ENCODE measurements at regions of chr6 and their contacts with region 1.

Region 1: GRCh38 chr6:150320442-150320841 is 48.4 kb upstream of the IYD start:
- DNase-seq: peak; percentile 94 to 96
- ATAC-seq: peak; percentile 89 to 90
- H3K4me3 ChIP-seq: no peak overlapping the region
- H3K27ac ChIP-seq: peak overlapping the region; percentile 65 to 93 (median 75)
- H3K4me1 ChIP-seq: peaks cover 42 to 56% of the 10 kb centered on the region in 2 donors
- H3K27me3 ChIP-seq: no peaks in the 10 kb centered on the region
- CTCF ChIP-seq: no peak
- POLR2A ChIP-seq: no peak

Region 2: GRCh38 chr6:150142670-150143515 is 177.5 kb before region 1 on chr6 and contains the start of gene PPP1R14C:
- in situ Hi-C with region 1: no loop called
- intact Hi-C with region 1: loop called (anchors 5 kb)
- DNase-seq: peak in 1 of 2 donors; percentile 30
- ATAC-seq: peak; percentile 68 to 72
- H3K4me3 ChIP-seq: peak within 1 kb of the TSS; percentile 64 to 71 (median 67)
- H3K27ac ChIP-seq: peak within 1 kb of the TSS; percentile 69 to 83 (median 76)
- H3K4me1 ChIP-seq: peaks cover 25 to 36% of the 10 kb centered on the region in 2 donors
- H3K27me3 ChIP-seq: peaks cover 0 to 15% (median 5%) of the 10 kb centered on the region in 3 donors
- CTCF ChIP-seq: no peak
- POLR2A ChIP-seq: peak; percentile 55 to 66
- total RNA-seq, gene PPP1R14C: 14.9 to 37.0 (median 21.7) TPM

Region 3: DNA sequence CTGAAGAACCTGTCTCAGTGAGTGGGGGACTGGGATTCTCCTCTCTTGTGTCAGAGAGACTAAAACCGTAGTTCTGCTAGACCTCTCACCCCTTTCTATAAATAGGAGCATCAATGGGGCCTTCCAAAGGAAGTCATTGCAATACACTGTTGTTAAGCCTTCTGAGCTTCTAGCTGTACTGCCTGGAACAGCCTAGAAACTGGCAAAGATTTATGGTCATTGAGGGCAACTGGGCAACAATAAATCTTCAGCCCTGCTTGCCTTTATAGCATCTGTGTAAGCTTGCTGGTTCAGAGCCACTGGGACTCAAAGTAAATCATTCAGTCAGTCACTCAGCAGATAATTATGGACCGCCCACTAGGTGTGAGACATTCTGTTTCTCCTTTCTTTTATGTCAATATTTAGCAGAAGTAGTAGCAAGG is 124.4 kb before region 1 on chr6:
- in situ Hi-C with region 1: loop called in 1 of 4 experiments (anchors 10 kb)
- intact Hi-C with region 1: loop called (anchors 2 kb)
- DNase-seq: peak; percentile 55 to 61
- ATAC-seq: peak; percentile 98
- H3K4me3 ChIP-seq: no peak overlapping the region
- H3K27ac ChIP-seq: peak overlapping the region; percentile 45 to 79 (median 74)
- H3K4me1 ChIP-seq: peaks cover 18 to 25% of the 10 kb centered on the region in 2 donors
- H3K27me3 ChIP-seq: no peaks in the 10 kb centered on the region
- CTCF ChIP-seq: no peak
- POLR2A ChIP-seq: no peak

Region 4: GRCh38 chr6:150267686-150268561 is 52.5 kb before region 1 on chr6:
- in situ Hi-C with region 1: loop called in 1 of 4 experiments (anchors 10 kb)
- intact Hi-C with region 1: no loop called
- DNase-seq: peak; percentile 77 to 78
- ATAC-seq: peak; percentile 81 to 95
- H3K4me3 ChIP-seq: no peak overlapping the region
- H3K27ac ChIP-seq: peak overlapping the region; percentile 18 to 77 (median 41)
- H3K4me1 ChIP-seq: peaks cover 8 to 30% of the 10 kb centered on the region in 2 donors
- H3K27me3 ChIP-seq: no peaks in the 10 kb centered on the region
- CTCF ChIP-seq: peak in 1 of 5 experiments; percentile 10
- POLR2A ChIP-seq: no peak

Measured in gastrocnemius medialis (tissue), 4 donors.